Ascending aorta (tissue), 2 donors: ENCODE measurements at regions of chr3 and their contacts with region 1.

Region 1: DNA sequence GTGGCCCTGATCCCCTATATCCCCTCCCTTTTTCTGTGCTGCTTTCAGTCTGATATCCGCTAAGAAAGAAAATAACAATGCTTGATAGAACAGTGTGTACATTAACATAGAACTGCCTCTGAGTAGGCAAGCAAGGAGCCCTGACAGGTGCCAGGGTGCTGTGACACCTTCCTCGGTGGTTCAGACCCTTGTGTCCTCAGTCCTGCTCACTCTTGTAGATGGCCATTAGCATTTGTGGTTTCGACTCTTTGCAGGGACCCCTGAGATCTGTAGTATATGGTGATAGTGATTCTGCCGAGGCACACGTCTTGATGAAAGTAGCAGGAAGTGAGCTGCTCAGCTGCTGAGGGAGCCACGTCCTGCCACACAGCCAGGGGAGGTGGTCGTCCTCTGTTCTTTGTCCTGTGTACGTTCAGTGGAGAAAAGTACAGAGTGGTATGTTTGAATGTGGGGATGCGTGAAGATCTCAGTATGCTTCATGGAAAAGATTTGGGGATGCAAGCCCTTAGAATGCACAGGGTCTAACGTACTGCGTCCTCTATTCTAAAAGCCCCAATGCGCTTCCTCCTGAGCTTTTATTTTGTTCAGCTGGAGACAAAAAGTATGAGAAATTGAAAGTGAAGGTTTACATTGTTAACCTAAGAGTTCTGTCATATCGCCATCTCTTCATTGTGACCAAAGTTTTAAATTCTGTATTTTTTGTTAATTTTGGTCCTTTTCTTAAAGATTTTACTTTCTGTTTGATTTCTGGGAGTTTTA is 35.4 kb downstream of the PXYLP1 start:
- DNase-seq: no peak
- H3K4me3 ChIP-seq: peak overlapping the region in 1 of 2 donors; percentile 18
- H3K27ac ChIP-seq: no peak overlapping the region
- H3K4me1 ChIP-seq: peaks cover 0 to 2% of the 10 kb centered on the region in 2 donors
- H3K27me3 ChIP-seq: no peaks in the 10 kb centered on the region
- CTCF ChIP-seq: no peak

Region 2: GRCh38 chr3:140447136-140447535 is 819.8 kb before region 1 on chr3:
- intact Hi-C with region 1: no loop called
- DNase-seq: no peak
- H3K4me3 ChIP-seq: no peak overlapping the region
- H3K27ac ChIP-seq: no peak overlapping the region
- H3K4me1 ChIP-seq: no peaks in the 10 kb centered on the region
- H3K27me3 ChIP-seq: no peaks in the 10 kb centered on the region
- CTCF ChIP-seq: no peak

Region 3: DNA sequence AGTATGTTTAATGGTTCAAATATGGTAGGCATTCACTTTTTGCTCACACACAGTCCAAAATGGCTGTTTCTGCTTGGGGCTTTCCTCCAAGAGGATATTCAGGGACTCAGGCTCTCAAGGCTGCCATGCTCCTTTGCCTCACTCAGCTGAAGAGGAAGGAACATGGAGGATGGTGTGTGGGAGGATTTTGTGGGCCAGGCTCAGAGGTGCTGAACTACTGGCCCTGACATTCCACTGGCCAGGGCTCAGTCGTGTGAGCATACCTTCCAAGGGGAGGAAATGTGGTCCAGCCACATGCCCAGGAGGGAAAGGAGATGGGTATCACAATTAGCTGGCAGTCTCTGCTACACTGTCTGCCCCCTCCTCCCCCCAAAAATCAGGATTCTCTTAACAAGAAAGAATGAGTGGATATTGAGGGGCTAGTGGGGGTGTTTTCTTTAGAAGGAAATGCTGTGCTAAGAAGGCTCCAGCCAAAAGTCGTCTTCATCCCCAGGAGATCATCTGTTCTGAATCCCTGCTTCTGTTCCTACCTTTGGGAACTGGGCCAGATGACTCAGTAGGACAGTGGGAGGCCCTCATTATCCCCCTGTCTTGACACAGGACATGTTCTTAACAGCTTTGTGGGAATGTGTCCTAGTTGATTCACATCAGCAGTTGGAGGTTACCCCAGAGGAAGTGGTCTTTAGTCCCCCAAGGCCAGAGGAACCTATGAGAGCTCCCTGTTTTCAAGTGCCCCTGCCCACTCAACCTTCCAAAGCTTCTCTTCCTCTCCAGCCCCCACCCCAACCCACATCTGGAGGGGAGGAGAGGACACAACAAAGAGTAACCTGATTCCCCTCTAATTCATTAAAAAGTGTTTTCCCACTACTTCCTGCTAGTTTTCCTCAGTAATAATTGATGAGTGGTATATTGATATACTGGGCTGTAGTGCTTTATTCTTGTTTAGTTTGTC is 26.4 kb before region 1 on chr3:
- intact Hi-C with region 1: loop called (anchors 1 kb)
- DNase-seq: no peak
- H3K4me3 ChIP-seq: no peak overlapping the region
- H3K27ac ChIP-seq: peak overlapping the region; percentile 84 to 85
- H3K4me1 ChIP-seq: peaks cover 20 to 31% of the 10 kb centered on the region in 2 donors
- H3K27me3 ChIP-seq: no peaks in the 10 kb centered on the region
- CTCF ChIP-seq: no peak

Region 4: DNA sequence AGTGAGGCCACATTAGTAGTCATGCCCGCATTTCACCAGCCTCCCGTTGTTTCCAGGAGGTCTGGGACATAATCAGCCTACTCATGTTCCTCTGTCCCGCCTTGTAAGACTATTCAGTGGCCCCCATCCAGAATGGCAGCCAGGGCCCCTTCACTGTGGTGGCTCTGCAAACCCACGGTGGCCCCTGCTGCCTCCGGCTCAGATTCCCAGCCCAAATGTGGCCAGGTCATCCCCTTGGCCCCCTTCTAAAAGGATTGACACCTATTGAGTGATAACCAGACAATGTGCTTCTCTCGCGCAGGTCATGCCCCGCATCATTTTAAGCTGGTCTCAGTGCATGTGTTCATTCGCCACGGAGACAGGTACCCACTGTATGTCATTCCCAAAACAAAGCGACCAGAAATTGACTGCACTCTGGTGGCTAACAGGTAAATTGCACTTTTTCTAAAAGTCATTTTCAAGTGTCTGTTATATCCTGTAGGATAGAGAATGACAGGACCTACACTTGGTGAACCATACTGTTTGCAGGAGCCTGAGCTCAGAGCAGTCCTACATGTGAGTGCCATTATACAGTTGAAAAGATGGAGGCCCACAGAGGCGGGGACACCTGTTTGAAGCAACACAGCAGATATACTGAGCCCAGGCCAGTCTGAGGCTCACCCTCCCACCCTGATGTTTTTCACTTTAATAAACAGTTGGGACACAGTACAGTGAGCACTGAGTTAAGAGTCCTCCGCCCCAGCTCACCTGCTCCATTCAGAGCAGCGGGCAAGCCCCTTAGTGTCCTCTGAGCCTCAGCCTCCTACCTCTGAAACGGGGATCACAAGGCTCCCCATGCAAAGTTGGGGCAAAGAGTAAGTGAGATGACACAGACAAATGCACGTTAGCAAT is 12.3 kb after region 1 on chr3:
- intact Hi-C with region 1: loop called (anchors 2 kb)
- DNase-seq: peak in 1 of 2 donors; percentile 63
- H3K4me3 ChIP-seq: no peak overlapping the region
- H3K27ac ChIP-seq: peak overlapping the region; percentile 83
- H3K4me1 ChIP-seq: peaks cover 12 to 23% of the 10 kb centered on the region in 2 donors
- H3K27me3 ChIP-seq: no peaks in the 10 kb centered on the region
- CTCF ChIP-seq: peak; percentile 57 to 69 (median 57)